ENCODE measurements at regions of chr13 and their contacts with region 1.

Region 1: DNA sequence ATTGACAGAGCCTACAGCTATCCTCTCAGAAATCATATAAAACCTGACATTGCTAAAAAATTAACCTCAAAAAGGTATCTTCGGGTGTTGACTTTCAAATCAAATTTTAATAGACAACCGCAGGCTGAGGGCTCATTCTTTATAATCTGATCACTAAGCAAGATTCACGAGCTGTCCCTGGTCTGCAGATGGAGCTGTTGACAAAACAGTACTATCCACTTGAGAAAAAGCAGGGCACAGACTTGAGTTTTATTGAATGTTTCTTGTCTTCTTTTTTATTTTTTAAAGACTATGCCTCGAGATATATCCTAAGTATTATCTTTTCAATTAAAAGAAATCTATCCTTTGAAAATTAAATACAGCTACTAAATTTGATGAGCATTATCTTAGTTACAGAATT is 540.5 kb downstream of the PCDH9 start:
- DNase-seq: no peak
- ATAC-seq: peak; percentile 31
- H3K4me3 Mint-ChIP-seq: no peak overlapping the region
- H3K27ac Mint-ChIP-seq: no peak overlapping the region
- H3K4me1 Mint-ChIP-seq: peaks cover 13% of the 10 kb centered on the region
- H3K27me3 Mint-ChIP-seq: no peaks in the 10 kb centered on the region
- CTCF ChIP-seq: no peak

Region 2: GRCh38 chr13:65656740-65657329 is 1032.8 kb before region 1 on chr13:
- CTCF ChIA-PET with region 1: interaction called, 6 read pairs
- POLR2A ChIA-PET with region 1: no interaction called
- intact Hi-C with region 1: loop called (anchors 2 kb)
- DNase-seq: no peak
- ATAC-seq: no peak
- H3K4me3 Mint-ChIP-seq: no peak overlapping the region
- H3K27ac Mint-ChIP-seq: no peak overlapping the region
- H3K4me1 Mint-ChIP-seq: no peaks in the 10 kb centered on the region
- H3K27me3 Mint-ChIP-seq: no peaks in the 10 kb centered on the region
- CTCF ChIP-seq: no peak

Region 3: GRCh38 chr13:66210677-66211076 is 479.0 kb before region 1 on chr13:
- CTCF ChIA-PET with region 1: no interaction called
- POLR2A ChIA-PET with region 1: no interaction called
- intact Hi-C with region 1: loop called (anchors 10 kb)
- DNase-seq: no peak
- ATAC-seq: no peak
- H3K4me3 Mint-ChIP-seq: no peak overlapping the region
- H3K27ac Mint-ChIP-seq: no peak overlapping the region
- H3K4me1 Mint-ChIP-seq: no peaks in the 10 kb centered on the region
- H3K27me3 Mint-ChIP-seq: no peaks in the 10 kb centered on the region
- CTCF ChIP-seq: no peak

Region 4: DNA sequence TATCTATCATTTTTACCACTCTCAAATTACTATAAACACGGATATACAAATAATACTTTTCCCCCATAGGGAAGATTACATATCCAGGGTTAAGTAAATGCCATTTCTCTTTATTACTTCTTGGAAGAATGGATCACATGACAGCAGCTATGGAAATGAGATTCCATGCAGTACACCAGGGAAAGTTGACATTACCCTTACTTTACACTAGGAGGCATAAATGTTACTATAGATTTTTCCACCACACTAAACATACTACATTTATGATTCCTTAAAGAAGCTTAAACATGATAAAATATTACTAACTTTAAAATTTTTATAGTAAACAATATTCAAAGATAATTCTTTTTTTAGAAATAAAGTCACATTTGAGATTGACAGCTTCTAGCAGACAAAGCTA is 70.9 kb before region 1 on chr13:
- CTCF ChIA-PET with region 1: interaction called, 50 read pairs
- POLR2A ChIA-PET with region 1: no interaction called
- intact Hi-C with region 1: loop called (anchors 1 kb)
- DNase-seq: no peak
- ATAC-seq: peak; percentile 56
- H3K4me3 Mint-ChIP-seq: no peak overlapping the region
- H3K27ac Mint-ChIP-seq: no peak overlapping the region
- H3K4me1 Mint-ChIP-seq: no peaks in the 10 kb centered on the region
- H3K27me3 Mint-ChIP-seq: no peaks in the 10 kb centered on the region
- CTCF ChIP-seq: no peak

Region 5: DNA sequence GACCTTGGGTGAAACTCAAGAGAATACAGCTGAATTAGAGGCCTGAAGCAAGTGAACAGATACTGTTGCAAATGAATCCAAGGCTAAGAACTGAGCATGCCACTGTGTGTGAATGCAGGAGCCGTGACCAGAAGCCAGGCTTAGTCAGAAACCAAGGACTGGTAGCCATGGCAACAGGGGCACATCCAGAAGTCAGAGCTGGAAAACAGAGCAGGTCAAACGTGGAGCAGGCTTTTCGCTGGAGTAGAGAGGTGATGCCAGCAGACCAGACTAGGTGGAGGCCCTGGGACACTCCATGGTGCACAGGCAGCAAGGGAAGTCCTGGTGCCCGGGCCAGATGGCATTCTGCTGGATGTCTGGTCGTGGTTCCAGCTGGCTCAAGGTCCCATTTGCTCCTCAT is 23.6 kb before region 1 on chr13:
- CTCF ChIA-PET with region 1: no interaction called
- POLR2A ChIA-PET with region 1: no interaction called
- intact Hi-C with region 1: no loop called
- DNase-seq: no peak
- ATAC-seq: no peak
- H3K4me3 Mint-ChIP-seq: no peak overlapping the region
- H3K27ac Mint-ChIP-seq: no peak overlapping the region
- H3K4me1 Mint-ChIP-seq: peaks cover 25% of the 10 kb centered on the region
- H3K27me3 Mint-ChIP-seq: no peaks in the 10 kb centered on the region
- CTCF ChIP-seq: no peak

Region 6: GRCh38 chr13:66994097-66994496 is 304.5 kb after region 1 on chr13:
- CTCF ChIA-PET with region 1: interaction called, 4 read pairs
- POLR2A ChIA-PET with region 1: interaction called, 3 read pairs
- intact Hi-C with region 1: loop called (anchors 10 kb)
- DNase-seq: peak; percentile 31
- ATAC-seq: peak; percentile 87
- H3K4me3 Mint-ChIP-seq: peak overlapping the region; percentile 52
- H3K27ac Mint-ChIP-seq: peak overlapping the region; percentile 89
- H3K4me1 Mint-ChIP-seq: peaks cover 42% of the 10 kb centered on the region
- H3K27me3 Mint-ChIP-seq: no peaks in the 10 kb centered on the region
- CTCF ChIP-seq: no peak

Region 7: DNA sequence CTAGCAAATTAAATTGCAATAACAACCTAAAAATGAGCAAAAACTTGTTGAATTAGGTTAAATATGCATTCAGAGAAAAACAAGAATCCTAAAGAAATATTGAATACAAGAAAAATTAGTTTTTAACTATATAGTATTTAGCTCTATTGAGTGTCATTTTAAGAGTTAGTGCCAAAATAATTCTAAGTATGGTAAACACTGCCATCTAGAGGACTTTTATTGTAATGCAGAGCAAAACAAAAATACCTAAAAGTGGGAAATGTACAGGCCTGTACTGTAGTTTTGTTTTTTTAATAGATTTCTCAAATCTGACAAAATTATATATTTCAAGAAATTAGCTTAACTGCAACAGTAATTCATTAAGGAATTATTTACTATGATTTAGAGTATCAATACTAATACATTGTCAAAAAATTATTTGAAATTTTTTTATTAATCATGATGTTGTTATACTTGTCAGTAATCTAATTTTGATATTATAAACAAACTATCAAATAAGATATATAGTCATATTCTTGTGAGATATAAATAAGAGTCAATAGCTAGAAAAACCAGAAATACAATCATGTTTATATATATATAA is 548.7 kb after region 1 on chr13:
- CTCF ChIA-PET with region 1: interaction called, 12 read pairs
- POLR2A ChIA-PET with region 1: no interaction called
- intact Hi-C with region 1: loop called (anchors 5 kb)
- DNase-seq: no peak
- ATAC-seq: peak; percentile 68
- H3K4me3 Mint-ChIP-seq: no peak overlapping the region
- H3K27ac Mint-ChIP-seq: no peak overlapping the region
- H3K4me1 Mint-ChIP-seq: no peaks in the 10 kb centered on the region
- H3K27me3 Mint-ChIP-seq: no peaks in the 10 kb centered on the region
- CTCF ChIP-seq: peak; percentile 82

Measured in activated B cell treated with CpG ODN at 0.5 μM for 24 hours (primary cell).